Prostate gland (tissue), 2 donors: ENCODE measurements at regions of chr7 and their contacts with region 1.

Region 1: DNA sequence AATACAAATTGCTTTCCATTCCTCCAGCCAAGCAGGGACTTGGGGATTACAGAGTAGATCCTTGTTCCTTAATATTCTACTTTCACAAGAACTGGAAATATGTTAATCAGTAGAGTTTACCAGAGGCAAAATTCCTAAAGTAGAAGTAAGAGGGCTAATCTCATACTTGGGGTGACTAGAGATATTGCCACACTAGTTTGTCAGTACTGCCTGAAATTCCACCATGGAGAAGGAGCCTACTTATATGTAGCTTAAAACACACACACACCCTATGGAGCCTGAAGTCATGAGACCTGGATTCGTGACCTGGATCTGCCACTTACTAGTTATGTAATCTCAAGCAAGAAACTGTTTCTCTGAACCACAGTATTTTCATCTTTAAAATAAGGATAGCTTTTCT is 33.9 kb downstream of the STRIP2 start:
- DNase-seq: no peak
- H3K4me3 ChIP-seq: no peak overlapping the region
- H3K27ac ChIP-seq: no peak overlapping the region
- H3K4me1 ChIP-seq: no peaks in the 10 kb centered on the region
- H3K27me3 ChIP-seq: no peaks in the 10 kb centered on the region
- CTCF ChIP-seq: no peak
- POLR2A ChIP-seq: no peak

Region 2: DNA sequence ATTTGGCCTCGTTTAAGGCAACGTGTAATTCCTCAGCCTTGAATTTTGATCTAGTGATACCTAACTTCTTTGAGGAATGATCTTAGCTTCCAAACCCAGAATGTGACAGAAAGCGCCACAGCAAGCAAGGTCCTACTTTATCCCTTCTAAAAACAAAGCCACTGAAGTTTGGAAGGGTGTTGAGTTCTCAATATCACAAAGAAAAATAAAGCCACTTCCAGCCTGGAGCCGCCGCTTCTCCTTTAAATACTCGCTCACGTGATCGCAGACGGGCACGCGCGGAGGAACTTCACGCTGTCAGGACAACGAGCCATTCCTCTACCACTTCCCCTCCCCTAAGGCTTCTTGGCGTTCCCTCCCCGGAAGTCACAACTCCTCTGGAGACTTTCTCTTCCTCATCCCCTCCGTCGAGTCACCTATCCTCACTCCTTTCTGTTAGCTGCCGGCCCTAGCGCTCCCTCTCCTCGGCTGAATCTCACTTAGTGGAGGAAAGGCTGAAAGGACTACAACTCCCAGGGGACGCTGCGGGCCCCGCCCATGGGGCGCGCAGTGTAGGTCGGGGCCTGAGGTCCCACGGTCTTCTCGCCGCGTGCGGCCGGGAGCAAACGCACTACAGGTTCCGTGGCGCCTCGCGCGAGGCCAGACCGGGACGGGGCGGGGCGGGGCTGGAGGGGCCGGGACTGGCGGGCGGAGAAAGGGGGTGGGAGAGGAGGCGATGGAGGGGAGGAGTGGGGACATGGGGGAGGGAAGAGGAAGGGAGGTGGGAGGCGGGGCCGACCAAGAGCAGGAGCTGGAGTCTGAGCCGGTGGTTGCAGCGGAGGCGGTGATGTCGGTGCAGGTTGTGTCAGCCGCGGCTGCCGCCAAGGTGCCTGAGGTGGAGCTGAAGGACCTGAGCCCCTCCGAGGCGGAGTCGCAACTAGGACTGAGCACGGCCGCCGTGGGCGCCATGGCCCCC is 243.6 kb before region 1 on chr7 and contains the start of gene AHCYL2:
- intact Hi-C with region 1: loop called (anchors 5 kb)
- DNase-seq: peak; percentile 98
- H3K4me3 ChIP-seq: peak within 1 kb of the TSS; percentile 81 to 98
- H3K27ac ChIP-seq: peak within 1 kb of the TSS; percentile 93 to 96
- H3K4me1 ChIP-seq: peaks cover 7% of the 10 kb centered on the region
- H3K27me3 ChIP-seq: no peaks in the 10 kb centered on the region
- CTCF ChIP-seq: peak in 1 of 4 experiments; percentile 14
- POLR2A ChIP-seq: peak; percentile 84
- total RNA-seq, gene AHCYL2: 15.2 to 38.3 TPM

Region 3: DNA sequence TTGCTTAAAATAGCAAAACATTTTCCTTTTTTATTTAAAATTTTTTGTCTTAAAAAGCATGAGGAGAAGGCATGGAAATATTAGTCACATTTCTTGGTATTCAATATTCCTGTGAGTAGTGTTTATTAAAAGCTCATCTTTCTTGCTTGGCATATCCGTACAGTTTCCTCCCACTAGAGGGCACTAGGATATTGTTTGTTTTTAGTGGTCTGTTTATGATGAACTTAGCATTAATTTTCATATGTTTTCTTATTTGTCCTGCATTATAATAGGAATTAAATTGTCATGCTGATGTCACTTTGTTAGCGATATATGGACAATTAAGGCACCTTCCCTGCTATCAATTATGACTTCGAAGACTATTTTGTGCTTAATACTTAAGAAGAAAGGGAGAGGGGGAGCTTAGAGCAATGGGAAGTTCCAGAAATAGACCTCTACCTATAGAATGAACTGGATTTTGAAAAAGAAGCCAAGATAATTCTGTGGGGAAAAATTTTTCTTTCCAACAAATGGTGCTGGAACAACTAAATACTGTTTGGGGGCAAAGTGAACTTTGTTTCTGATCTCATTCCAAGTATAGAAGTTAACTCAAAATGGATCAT is 124.9 kb before region 1 on chr7:
- intact Hi-C with region 1: loop called (anchors 5 kb)
- DNase-seq: peak; percentile 20
- H3K4me3 ChIP-seq: no peak overlapping the region
- H3K27ac ChIP-seq: no peak overlapping the region
- H3K4me1 ChIP-seq: no peaks in the 10 kb centered on the region
- H3K27me3 ChIP-seq: no peaks in the 10 kb centered on the region
- CTCF ChIP-seq: peak in 3 of 4 experiments; percentile 56 to 79 (median 63)
- POLR2A ChIP-seq: no peak

Region 4: GRCh38 chr7:129367700-129368388 is 100.2 kb before region 1 on chr7:
- intact Hi-C with region 1: loop called (anchors 2 kb)
- DNase-seq: peak; percentile 65
- H3K4me3 ChIP-seq: no peak overlapping the region
- H3K27ac ChIP-seq: no peak overlapping the region
- H3K4me1 ChIP-seq: no peaks in the 10 kb centered on the region
- H3K27me3 ChIP-seq: no peaks in the 10 kb centered on the region
- CTCF ChIP-seq: peak; percentile 37 to 81 (median 76)
- POLR2A ChIP-seq: peak; percentile 59